Heart left ventricle (tissue), 16 donors: ENCODE measurements at regions of chr7 and their contacts with region 1.

Region 1: GRCh38 chr7:23055582-23056178 is 41.8 kb upstream of the HYCC1 start:
- DNase-seq: peak in 2 of 5 donors; percentile 18 to 36
- ATAC-seq: peak; percentile 71 to 84 (median 78)
- H3K4me3 ChIP-seq: no peak overlapping the region
- H3K27ac ChIP-seq: no peak overlapping the region
- H3K4me1 ChIP-seq: peaks cover 0 to 4% (median 0%) of the 10 kb centered on the region in 12 donors
- H3K27me3 ChIP-seq: no peaks in the 10 kb centered on the region
- CTCF ChIP-seq: peak; percentile 78 to 94 (median 92)
- POLR2A ChIP-seq: no peak

Region 2: DNA sequence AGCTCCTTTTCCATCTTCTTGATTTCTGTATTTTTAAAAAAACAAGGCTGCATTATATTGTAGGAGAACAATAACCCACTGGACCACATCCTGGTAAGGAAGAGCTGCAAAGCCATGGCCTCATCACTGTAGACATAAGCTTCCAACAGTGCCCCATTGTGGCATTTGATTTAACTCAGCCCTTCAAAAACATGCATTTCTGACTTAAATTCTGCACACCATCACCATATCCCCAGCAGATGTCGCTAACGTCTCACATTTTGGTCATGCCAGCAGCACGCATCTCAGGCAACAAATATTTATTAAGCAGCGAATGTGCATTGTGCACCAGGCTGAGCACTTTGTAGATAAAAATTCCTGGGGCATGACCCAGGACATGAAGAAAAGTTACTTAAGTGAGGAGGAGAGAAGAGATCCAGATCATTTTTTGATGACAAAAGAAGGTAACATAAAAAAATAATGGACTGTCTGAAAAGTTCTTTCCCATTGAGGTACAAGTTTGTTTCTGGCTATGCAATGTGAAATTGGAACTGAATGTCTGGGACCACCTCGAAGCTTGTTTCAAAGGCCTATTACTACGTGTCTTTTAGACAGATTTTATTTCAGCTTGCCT is 945.3 kb before region 1 on chr7:
- intact Hi-C with region 1: loop called in 1 of 10 experiments (anchors 5 kb)
- DNase-seq: peak in 4 of 5 donors; percentile 44 to 74 (median 60)
- ATAC-seq: peak; percentile 64 to 77 (median 75)
- H3K4me3 ChIP-seq: no peak overlapping the region
- H3K27ac ChIP-seq: peak overlapping the region in 1 of 12 donors; percentile 2
- H3K4me1 ChIP-seq: peaks cover 0 to 25% (median 3%) of the 10 kb centered on the region in 12 donors
- H3K27me3 ChIP-seq: peaks cover 0 to 3% (median 0%) of the 10 kb centered on the region in 9 donors
- CTCF ChIP-seq: peak; percentile 66 to 88 (median 81)
- POLR2A ChIP-seq: peak in 1 of 2 donors; percentile 8

Region 3: GRCh38 chr7:22726345-22727185 is 329.1 kb before region 1 on chr7:
- intact Hi-C with region 1: loop called in 8 of 10 experiments (anchors 5 to 10 kb)
- DNase-seq: peak in 4 of 5 donors; percentile 31 to 56 (median 42)
- ATAC-seq: peak; percentile 29 to 72 (median 52)
- H3K4me3 ChIP-seq: peak overlapping the region; percentile 3 to 57 (median 45)
- H3K27ac ChIP-seq: peak overlapping the region; percentile 19 to 85 (median 70)
- H3K4me1 ChIP-seq: peaks cover 4 to 78% (median 40%) of the 10 kb centered on the region in 12 donors
- H3K27me3 ChIP-seq: no peaks in the 10 kb centered on the region
- CTCF ChIP-seq: peak; percentile 27 to 61 (median 46)
- POLR2A ChIP-seq: no peak

Region 4: DNA sequence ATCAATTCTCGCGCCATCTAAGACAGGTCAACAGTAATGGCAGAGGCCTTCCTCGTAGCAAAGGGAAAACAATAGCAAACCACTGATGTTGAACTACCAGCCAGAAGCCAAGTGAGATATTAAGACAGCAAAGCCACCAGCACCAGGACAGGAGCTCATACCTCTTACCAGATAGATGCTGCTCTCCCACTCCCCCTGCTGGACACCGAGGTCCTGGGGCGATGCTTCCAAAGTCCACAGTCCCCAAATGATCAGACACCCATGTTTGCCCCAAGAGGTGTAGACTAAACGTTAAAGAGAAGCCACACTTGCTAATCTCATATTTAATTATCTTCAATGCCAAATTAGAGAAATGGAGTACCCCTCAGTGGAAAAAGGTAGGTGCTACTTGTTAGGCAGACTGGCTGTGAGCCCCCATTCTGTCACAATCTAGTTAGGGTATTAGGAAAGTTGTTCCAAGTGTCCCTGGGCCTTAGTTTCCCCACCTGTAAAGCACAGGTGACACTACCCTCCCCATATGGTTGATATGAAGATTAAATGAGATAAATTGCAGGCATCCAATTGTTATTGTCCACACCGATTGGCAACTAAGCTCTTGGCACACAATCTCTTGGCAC is 273.0 kb before region 1 on chr7:
- intact Hi-C with region 1: loop called in 1 of 10 experiments (anchors 5 kb)
- DNase-seq: peak; percentile 42 to 71 (median 62)
- ATAC-seq: peak; percentile 47 to 75 (median 67)
- H3K4me3 ChIP-seq: no peak overlapping the region
- H3K27ac ChIP-seq: no peak overlapping the region
- H3K4me1 ChIP-seq: peaks cover 0 to 15% (median 0%) of the 10 kb centered on the region in 12 donors
- H3K27me3 ChIP-seq: no peaks in the 10 kb centered on the region
- CTCF ChIP-seq: peak; percentile 64 to 84 (median 73)
- POLR2A ChIP-seq: no peak

Region 5: DNA sequence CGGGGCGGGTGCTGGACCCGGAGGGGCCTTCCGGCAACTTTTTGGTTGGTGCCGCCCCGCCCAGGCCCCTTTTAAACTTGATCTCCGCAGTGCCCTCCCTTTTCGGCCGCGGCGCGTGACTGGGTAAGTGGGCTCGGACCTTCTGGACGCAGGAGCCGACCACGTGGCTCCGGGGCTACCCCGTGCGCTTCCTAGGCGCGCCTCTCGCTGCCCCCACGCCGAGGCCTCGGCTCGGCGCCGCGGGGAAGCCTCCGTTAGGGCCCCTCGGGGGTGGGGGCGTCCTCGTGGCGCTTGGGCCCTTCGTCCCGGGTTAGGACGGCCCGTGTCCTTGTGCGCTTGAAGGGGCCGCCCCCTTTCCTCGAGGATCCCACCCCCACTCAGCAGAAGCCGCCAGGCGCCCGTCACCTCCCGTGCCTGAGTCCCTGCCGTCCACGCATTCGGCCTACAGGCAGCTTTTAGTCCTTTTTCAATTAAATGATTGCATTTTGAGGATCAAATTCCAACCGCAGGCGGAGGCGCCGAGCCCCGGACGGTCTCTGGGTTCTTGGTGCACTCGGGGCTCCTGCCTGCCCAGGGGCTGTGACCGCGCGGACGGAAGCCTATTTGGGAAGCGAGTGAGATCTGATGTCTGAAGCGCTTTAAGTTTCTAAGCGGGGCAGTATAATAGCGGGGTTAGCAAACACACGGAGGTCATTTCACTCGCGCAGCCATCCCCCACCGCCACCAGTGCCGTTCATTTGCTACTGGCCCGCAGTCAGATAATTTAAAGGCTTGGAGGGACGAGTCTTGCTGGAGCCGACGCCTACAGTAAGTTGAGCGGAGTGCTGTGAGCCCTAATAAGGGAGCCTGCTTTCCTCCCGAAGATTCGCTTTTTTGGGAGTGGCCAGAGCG is 201.3 kb before region 1 on chr7:
- intact Hi-C with region 1: loop called in 8 of 10 experiments (anchors 5 to 10 kb)
- DNase-seq: peak; percentile 88 to 96 (median 93)
- ATAC-seq: peak; percentile 73 to 93 (median 86)
- H3K4me3 ChIP-seq: peak overlapping the region; percentile 40 to 91 (median 82)
- H3K27ac ChIP-seq: peak overlapping the region; percentile 83 to 98 (median 96)
- H3K4me1 ChIP-seq: peaks cover 0 to 45% (median 20%) of the 10 kb centered on the region in 12 donors
- H3K27me3 ChIP-seq: no peaks in the 10 kb centered on the region
- CTCF ChIP-seq: peak in 11 of 12 donors; percentile 67 to 96 (median 93)
- POLR2A ChIP-seq: peak in 1 of 2 donors; percentile 74

Region 6: GRCh38 chr7:23013715-23014649 is 41.7 kb before region 1 on chr7 and contains the start of gene HYCC1:
- intact Hi-C with region 1: loop called in 2 of 10 experiments (anchors 2 to 5 kb)
- DNase-seq: peak; percentile 99
- ATAC-seq: peak; percentile 100
- H3K4me3 ChIP-seq: peak within 1 kb of the TSS; percentile 73 to 94 (median 84)
- H3K27ac ChIP-seq: peak within 1 kb of the TSS; percentile 58 to 87 (median 84)
- H3K4me1 ChIP-seq: peaks cover 2 to 77% (median 35%) of the 10 kb centered on the region in 12 donors
- H3K27me3 ChIP-seq: no peaks in the 10 kb centered on the region
- CTCF ChIP-seq: peak; percentile 46 to 77 (median 62)
- POLR2A ChIP-seq: peak; percentile 98 to 100
- total RNA-seq, gene HYCC1: 31.4 to 48.2 (median 35.6) TPM

Region 7: GRCh38 chr7:23168111-23168885 is 112.6 kb after region 1 on chr7:
- intact Hi-C with region 1: no loop called
- DNase-seq: no peak
- ATAC-seq: peak; percentile 71 to 90 (median 80)
- H3K4me3 ChIP-seq: no peak overlapping the region
- H3K27ac ChIP-seq: peak overlapping the region; percentile 25 to 79 (median 66)
- H3K4me1 ChIP-seq: peaks cover 0 to 12% (median 0%) of the 10 kb centered on the region in 12 donors
- H3K27me3 ChIP-seq: no peaks in the 10 kb centered on the region
- CTCF ChIP-seq: no peak
- POLR2A ChIP-seq: no peak

Region 8: GRCh38 chr7:24039991-24040624 is 984.4 kb after region 1 on chr7:
- intact Hi-C with region 1: no loop called
- DNase-seq: no peak
- ATAC-seq: no peak
- H3K4me3 ChIP-seq: no peak overlapping the region
- H3K27ac ChIP-seq: no peak overlapping the region
- H3K4me1 ChIP-seq: no peaks in the 10 kb centered on the region
- H3K27me3 ChIP-seq: no peaks in the 10 kb centered on the region
- CTCF ChIP-seq: no peak
- POLR2A ChIP-seq: no peak